Mammary epithelial cell (primary cell): ENCODE measurements at regions of chr2 and their contacts with region 1.

Region 1: DNA sequence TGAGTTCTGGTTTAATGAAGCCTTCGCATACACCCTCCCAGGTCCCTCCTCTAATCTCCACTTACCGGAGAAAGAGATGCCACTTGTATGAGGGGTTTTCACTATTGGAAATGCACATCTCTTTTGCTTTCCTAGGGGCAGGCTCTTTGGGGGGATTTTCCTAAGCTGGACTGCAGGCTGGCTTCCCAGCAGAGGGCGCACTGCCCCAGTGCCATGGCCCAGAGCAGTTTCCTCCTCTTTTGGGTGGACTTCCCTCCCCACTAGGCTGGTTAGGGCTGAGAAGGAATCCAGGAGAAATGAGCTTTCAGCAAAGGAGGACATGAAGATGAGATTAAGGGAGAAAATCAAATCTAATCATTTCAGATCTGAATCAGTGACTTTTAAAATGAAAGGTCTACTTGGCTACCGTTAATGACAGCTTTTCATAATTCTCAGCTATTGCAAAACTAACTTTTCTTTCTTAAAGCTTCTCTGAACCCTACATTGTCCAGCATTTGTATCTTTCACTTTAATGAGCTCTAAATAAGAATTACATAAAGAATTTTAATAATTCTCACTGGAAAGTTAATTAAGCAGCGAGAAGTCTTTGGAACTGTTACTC is 784.1 kb upstream of the FANCL start:
- DNase-seq: peak; percentile 1
- H3K4me3 ChIP-seq: no peak overlapping the region
- H3K27ac ChIP-seq: no peak overlapping the region
- H3K4me1 ChIP-seq: no peaks in the 10 kb centered on the region
- H3K27me3 ChIP-seq: no peaks in the 10 kb centered on the region
- CTCF ChIP-seq: peak; percentile 43 to 82

Region 2: GRCh38 chr2:58436872-58437271 is 588.4 kb before region 1 on chr2:
- CTCF ChIA-PET with region 1: no interaction called
- dilution Hi-C with region 1: no loop called
- in situ Hi-C with region 1: no loop called
- intact Hi-C with region 1: no loop called
- DNase-seq: peak; percentile 9
- H3K4me3 ChIP-seq: no peak overlapping the region
- H3K27ac ChIP-seq: no peak overlapping the region
- H3K4me1 ChIP-seq: no peaks in the 10 kb centered on the region
- H3K27me3 ChIP-seq: peaks cover 2% of the 10 kb centered on the region
- CTCF ChIP-seq: no peak

Region 3: GRCh38 chr2:60119791-60120190 is 1094.5 kb after region 1 on chr2:
- CTCF ChIA-PET with region 1: no interaction called
- dilution Hi-C with region 1: no loop called
- in situ Hi-C with region 1: no loop called
- intact Hi-C with region 1: loop called (anchors 10 kb)
- DNase-seq: no peak
- H3K4me3 ChIP-seq: no peak overlapping the region
- H3K27ac ChIP-seq: no peak overlapping the region
- H3K4me1 ChIP-seq: no peaks in the 10 kb centered on the region
- H3K27me3 ChIP-seq: no peaks in the 10 kb centered on the region
- CTCF ChIP-seq: peak in 1 of 2 donors; percentile 22

Region 4: DNA sequence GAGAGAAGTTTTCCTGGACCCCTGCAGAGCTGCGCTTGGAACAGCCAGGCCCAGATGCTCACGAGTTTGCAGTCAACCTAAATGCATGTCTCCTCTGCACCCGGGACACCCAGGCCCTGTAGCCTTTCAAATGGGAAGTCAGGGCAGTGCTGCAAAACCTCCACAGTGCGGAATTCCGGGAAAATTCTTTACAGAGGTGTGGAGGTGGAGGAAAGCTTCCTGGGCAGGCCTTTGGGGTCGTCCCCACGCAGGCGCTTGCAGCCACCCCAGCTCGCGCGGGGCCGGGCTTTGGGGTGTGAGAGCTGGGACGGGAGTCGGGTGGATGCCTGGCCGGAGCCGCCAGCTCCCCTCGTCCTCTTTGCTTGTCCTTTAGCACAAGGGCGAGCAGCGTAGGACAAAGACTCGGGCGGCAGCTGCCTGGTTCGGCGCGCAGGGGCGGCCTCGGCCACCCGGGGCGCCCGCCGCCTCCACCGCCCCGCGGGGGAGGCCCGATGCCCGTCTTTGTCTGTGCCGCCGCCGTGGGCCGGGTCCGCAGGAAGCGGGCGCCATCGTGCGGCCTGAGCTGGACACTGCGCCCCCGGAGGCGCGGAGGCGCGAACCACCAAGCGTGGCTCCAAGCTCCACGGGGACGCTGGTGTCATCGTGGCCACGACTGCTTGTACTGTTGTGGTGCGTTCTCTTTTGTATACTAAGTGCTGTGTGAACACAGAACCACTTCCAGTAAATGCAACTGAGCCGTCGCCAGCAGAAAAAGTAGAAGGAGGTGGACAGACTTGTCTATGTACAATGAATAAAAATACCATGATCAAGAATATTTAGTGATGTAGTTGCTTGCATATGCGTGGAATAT is 1556.4 kb after region 1 on chr2:
- CTCF ChIA-PET with region 1: no interaction called
- dilution Hi-C with region 1: no loop called
- in situ Hi-C with region 1: no loop called
- intact Hi-C with region 1: loop called (anchors 10 kb)
- DNase-seq: peak; percentile 37
- H3K4me3 ChIP-seq: peak overlapping the region; percentile 23 to 45 (median 45)
- H3K27ac ChIP-seq: no peak overlapping the region
- H3K4me1 ChIP-seq: peaks cover 20% of the 10 kb centered on the region
- H3K27me3 ChIP-seq: no peaks in the 10 kb centered on the region
- CTCF ChIP-seq: peak; percentile 84 to 93